ENCODE measurements at regions of chr1 and their contacts with region 1.

Region 1: DNA sequence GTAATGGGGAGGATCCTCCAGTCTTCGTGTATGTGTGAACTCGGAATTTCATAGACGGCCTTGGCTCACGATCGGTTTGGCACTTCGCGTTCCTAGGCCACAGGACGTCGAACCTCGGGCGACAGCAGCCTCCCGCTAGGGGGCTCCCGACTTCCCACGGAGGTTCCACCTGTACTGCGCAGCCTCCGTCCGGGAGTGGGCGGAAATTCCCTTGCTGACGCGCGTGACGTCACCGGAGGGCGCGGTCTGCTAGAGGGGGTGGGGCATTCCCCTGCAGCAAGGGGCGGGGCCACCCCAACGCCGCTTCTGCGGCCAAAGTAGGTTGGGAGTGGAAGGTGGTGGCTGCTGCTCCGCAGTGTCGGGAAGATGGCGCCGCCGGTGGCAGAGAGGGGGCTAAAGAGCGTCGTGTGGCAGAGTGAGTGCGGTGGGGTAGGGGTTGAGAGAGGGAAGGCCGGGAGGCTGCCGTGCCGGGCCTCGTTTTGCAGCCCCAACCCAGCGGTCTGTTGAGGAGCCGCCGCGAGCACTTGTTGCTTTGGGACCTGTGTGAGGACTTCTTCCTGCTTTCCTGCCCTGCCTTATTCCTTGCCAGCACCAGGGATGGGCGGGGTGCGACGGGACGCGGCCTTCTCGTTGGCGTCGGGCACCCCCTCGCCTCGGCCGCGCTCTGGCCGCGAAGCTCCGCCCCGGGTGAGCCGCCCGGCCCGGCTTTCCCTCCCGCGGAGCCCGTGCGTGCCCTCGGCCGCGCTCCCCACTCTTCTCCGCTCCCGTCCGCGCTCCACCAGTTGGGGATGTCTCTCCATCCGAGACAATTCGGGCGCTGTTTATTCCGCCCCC is at the start of gene STXBP3:
- DNase-seq: peak; percentile 98 to 100 (median 99)
- ATAC-seq: peak; percentile 97
- H3K4me3 ChIP-seq: peak within 1 kb of the TSS; percentile 76
- H3K4me3 Mint-ChIP-seq: peak within 1 kb of the TSS; percentile 90 to 100 (median 97)
- H3K27ac ChIP-seq: peak within 1 kb of the TSS; percentile 98
- H3K27ac Mint-ChIP-seq: peak within 1 kb of the TSS; percentile 93 to 100 (median 98)
- H3K4me1 ChIP-seq: peaks cover 3 to 6% of the 10 kb centered on the region in 2 donors
- H3K4me1 Mint-ChIP-seq: peaks cover 26 to 47% (median 41%) of the 10 kb centered on the region in 7 donors
- H3K27me3 ChIP-seq: no peaks in the 10 kb centered on the region
- H3K27me3 Mint-ChIP-seq: peaks cover 0 to 5% (median 0%) of the 10 kb centered on the region in 5 donors
- total RNA-seq, gene STXBP3: 46.8 to 75.2 (median 54.0) TPM

Region 2: DNA sequence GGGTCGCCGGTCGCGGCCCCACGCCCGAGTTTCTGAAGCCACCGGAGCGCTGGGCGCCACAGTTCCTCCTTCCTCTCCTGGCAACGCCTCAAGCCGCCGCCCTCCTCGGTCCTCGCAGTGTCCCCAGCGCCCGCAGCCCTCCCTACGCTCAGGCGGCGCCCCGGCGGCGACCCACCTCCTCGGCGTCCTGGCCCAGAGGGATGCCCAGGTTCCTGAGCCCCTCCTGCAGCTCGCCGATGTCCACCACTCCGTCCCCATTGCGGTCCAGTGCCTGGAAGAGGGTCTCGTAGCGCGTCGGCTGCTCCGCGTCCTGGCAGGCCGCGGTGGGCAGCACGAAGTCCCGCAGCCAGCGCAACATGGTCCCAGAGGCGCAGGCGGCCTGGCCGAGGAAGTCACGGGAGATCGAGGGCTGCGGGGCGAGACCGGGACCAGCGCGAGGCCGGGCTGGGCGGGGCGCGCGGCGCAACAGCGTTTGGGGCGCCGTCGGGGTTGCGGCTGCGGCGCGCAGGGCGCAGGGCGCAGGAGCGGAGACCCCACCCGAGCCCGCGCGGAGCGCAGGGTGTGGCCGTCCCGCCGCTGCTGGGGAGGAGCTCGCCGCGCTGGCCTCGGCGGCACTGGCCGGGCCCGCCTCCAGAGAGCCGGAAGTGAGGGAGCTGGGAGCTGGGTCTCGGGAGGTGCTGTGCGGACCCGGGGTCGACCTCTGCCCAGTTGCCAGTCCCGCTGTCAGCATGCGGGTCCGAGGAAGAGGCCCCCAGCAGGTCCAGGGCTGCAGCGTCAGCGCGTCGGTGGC is 546.6 kb before region 1 on chr1 and contains the start of gene SLC25A24:
- CTCF ChIA-PET with region 1: no interaction called
- POLR2A ChIA-PET with region 1: no interaction called
- intact Hi-C with region 1: loop called (anchors 2 to 5 kb)
- DNase-seq: peak; percentile 58 to 83 (median 71)
- ATAC-seq: peak; percentile 96
- H3K4me3 ChIP-seq: peak within 1 kb of the TSS; percentile 75
- H3K4me3 Mint-ChIP-seq: peak within 1 kb of the TSS; percentile 69 to 93 (median 88)
- H3K27ac ChIP-seq: peak within 1 kb of the TSS; percentile 65
- H3K27ac Mint-ChIP-seq: peak within 1 kb of the TSS; percentile 52 to 87 (median 82)
- H3K4me1 ChIP-seq: peaks cover 3 to 16% of the 10 kb centered on the region in 2 donors
- H3K4me1 Mint-ChIP-seq: peaks cover 18 to 42% (median 30%) of the 10 kb centered on the region in 7 donors
- H3K27me3 ChIP-seq: no peaks in the 10 kb centered on the region
- H3K27me3 Mint-ChIP-seq: peaks cover 0 to 18% (median 0%) of the 10 kb centered on the region in 5 donors
- total RNA-seq, gene SLC25A24: 7.1 to 27.2 (median 10.2) TPM

Region 3: GRCh38 chr1:108661030-108661620 is 85.5 kb before region 1 on chr1 and contains the start of gene HENMT1:
- CTCF ChIA-PET with region 1: no interaction called
- POLR2A ChIA-PET with region 1: interaction called, 3 read pairs
- intact Hi-C with region 1: loop called (anchors 1 kb)
- DNase-seq: peak; percentile 69 to 91 (median 88)
- ATAC-seq: peak; percentile 92
- H3K4me3 ChIP-seq: peak within 1 kb of the TSS; percentile 75
- H3K4me3 Mint-ChIP-seq: peak within 1 kb of the TSS; percentile 78 to 89 (median 85)
- H3K27ac ChIP-seq: peak within 1 kb of the TSS; percentile 99
- H3K27ac Mint-ChIP-seq: peak within 1 kb of the TSS; percentile 93 to 98 (median 96)
- H3K4me1 ChIP-seq: peaks cover 7 to 9% of the 10 kb centered on the region in 2 donors
- H3K4me1 Mint-ChIP-seq: peaks cover 11 to 46% (median 37%) of the 10 kb centered on the region in 7 donors
- H3K27me3 ChIP-seq: no peaks in the 10 kb centered on the region
- H3K27me3 Mint-ChIP-seq: no peaks in the 10 kb centered on the region
- total RNA-seq, gene HENMT1: 5.8 to 17.3 (median 13.5) TPM

Region 4: DNA sequence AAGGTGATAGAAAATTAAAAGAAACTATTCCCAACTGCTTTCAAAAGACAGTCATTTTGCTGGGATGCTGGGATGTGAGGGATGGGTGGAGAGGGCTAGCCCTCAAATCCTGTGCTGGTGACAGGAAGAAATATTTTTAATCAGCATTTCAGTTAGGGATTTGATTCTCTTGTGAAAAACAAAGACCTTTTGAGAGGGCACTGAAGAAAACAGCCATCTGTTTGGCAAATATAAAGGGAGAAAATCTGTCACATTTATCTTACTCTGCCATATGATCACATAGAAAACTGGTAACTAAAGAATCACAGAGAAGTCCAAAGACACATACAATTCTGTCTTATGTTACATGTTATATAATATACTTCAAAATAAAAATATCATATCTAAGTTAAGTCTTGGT is 12.2 kb after region 1 on chr1:
- CTCF ChIA-PET with region 1: no interaction called
- POLR2A ChIA-PET with region 1: interaction called, 3 read pairs
- intact Hi-C with region 1: loop called in 1 of 2 experiments (anchors 1 kb)
- DNase-seq: no peak
- ATAC-seq: no peak
- H3K4me3 ChIP-seq: no peak overlapping the region
- H3K4me3 Mint-ChIP-seq: no peak overlapping the region
- H3K27ac ChIP-seq: no peak overlapping the region
- H3K27ac Mint-ChIP-seq: peak overlapping the region in 1 of 9 donors; percentile 48
- H3K4me1 ChIP-seq: no peaks in the 10 kb centered on the region
- H3K4me1 Mint-ChIP-seq: peaks cover 0 to 8% (median 4%) of the 10 kb centered on the region in 7 donors
- H3K27me3 ChIP-seq: no peaks in the 10 kb centered on the region
- H3K27me3 Mint-ChIP-seq: no peaks in the 10 kb centered on the region

Region 5: DNA sequence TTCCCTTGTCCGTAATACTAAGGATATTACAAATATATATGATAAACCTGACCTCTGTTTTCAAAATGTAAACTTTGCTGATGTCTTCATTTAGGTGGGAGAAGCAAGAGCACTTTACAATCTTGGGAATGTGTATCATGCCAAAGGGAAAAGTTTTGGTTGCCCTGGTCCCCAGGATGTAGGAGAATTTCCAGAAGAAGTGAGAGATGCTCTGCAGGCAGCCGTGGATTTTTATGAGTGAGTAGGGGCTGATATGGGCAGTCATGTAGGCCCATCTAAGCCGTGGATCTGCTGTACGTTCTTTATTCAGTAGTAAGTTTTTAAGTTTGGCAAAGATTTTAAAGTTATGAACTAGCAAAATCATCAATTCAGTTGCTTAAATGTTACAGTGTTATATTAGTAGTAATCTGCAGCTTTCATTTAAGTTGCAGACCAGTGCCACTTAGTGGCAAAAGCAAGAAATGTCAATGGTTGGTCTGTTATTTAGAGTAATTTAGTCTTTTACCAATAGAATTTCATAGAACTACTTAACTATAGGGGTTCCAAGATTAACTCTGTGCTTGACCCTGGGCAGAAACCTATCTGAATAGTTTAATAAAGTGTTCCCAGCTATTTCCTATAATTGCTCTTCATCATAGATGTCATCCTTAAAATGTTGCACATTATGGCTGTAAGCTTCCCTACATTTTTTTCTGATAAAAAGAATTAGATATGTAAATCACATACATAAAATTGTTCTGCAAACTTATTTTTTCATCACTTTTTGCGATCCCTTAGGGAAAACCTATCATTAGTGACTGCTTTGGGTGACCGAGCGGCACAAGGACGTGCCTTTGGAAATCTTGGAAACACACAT is 151.5 kb after region 1 on chr1:
- CTCF ChIA-PET with region 1: no interaction called
- POLR2A ChIA-PET with region 1: no interaction called
- intact Hi-C with region 1: loop called (anchors 1 kb)
- DNase-seq: peak in 7 of 9 donors; percentile 30 to 67 (median 54)
- ATAC-seq: peak; percentile 82
- H3K4me3 ChIP-seq: no peak overlapping the region
- H3K4me3 Mint-ChIP-seq: no peak overlapping the region
- H3K27ac ChIP-seq: no peak overlapping the region
- H3K27ac Mint-ChIP-seq: no peak overlapping the region
- H3K4me1 ChIP-seq: no peaks in the 10 kb centered on the region
- H3K4me1 Mint-ChIP-seq: peaks cover 0 to 4% (median 1%) of the 10 kb centered on the region in 7 donors
- H3K27me3 ChIP-seq: no peaks in the 10 kb centered on the region
- H3K27me3 Mint-ChIP-seq: peaks cover 0 to 4% (median 3%) of the 10 kb centered on the region in 5 donors

Region 6: DNA sequence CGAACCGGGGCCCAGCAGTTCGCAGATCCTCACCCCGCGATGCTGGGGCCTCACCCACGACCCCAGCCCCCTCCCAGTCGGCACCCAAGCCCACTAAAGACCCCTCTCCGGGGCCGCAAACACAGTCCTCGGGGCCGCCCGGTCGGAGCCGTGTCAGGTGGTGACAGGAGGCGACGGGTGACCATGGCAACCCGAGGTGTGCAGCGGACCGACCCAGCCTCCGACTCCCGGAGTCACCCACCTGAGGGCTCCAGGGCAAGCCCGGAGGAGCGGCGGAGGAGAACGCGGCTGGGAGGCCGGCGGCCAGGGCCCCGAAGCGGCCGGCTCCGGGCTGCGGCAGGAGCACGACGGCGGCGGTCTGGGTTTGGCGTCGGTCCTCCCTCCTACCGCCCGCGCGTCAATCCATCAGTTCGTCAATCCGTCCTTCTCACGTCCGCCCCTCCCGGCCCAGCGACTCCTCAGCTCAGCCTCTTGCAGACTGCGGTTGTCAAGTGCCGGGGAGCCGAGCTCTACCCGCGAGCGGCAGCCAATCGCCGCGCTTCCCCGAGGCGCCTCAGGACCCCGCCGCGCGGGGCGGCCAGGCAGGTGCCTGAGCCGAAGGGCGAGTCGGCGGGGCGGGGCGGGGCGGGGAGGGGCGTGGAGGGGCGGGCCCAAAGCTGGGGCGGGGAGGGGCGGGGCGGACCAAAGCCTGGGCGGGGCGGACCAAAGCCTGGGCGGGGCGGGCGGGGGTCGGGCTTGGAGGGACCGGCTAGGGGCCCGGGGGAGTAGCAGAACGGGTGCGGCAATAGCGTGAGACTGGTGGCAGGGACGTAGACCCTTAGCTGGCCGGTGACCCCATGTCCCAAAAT is 295.3 kb after region 1 on chr1 and contains the start of gene WDR47:
- CTCF ChIA-PET with region 1: no interaction called
- POLR2A ChIA-PET with region 1: no interaction called
- intact Hi-C with region 1: loop called (anchors 1 kb)
- DNase-seq: peak; percentile 95 to 97 (median 96)
- ATAC-seq: peak; percentile 99
- H3K4me3 ChIP-seq: peak within 1 kb of the TSS; percentile 97
- H3K4me3 Mint-ChIP-seq: peak within 1 kb of the TSS; percentile 86 to 97 (median 94)
- H3K27ac ChIP-seq: peak within 1 kb of the TSS; percentile 90
- H3K27ac Mint-ChIP-seq: peak within 1 kb of the TSS; percentile 78 to 97 (median 91)
- H3K4me1 ChIP-seq: peaks cover 0 to 7% of the 10 kb centered on the region in 2 donors
- H3K4me1 Mint-ChIP-seq: peaks cover 7 to 25% (median 16%) of the 10 kb centered on the region in 7 donors
- H3K27me3 ChIP-seq: no peaks in the 10 kb centered on the region
- H3K27me3 Mint-ChIP-seq: peaks cover 0 to 7% (median 0%) of the 10 kb centered on the region in 5 donors
- total RNA-seq, gene WDR47: 9.8 to 15.4 (median 14.4) TPM

Region 7: DNA sequence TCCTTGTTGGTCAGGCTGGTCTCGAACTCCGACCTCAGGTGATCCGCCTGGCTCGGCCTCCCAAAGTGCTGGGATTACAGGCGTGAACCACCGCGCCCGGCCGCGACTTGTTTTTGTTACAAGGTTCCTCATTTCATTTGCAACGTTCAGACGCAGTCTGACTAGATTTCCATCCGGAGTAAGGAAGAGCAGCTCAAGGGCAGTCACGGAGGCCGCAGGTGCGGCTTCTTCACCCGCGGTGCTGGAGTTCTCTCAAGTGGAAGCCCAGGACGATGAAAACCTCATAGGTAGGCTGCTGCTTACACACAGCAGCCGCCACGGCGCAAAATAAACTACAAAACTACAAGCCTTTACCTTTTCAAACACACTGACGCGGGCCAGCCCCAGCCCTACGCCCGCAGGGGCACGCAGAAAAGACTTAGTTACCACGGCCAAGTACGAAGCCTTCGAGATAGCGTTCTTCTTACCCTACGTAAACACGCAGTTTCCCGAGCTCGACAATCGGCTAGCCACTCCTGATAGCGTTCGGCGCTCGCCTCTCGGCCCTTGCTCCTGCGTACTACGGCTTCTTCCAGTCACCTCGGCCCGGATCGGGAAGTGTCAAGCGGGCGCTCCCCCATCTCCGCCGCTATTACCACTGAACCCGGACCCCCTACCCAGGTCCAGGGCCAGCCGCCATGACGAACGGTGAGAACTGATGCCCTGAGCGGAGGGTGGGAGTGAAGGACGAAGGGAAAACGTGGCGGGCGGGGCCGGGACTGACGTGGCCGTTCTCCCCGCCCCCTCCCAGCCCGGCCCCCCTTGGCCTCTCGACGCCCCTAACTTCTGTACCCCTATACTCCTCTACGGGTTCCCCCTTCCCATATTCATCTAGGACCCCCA is 343.8 kb after region 1 on chr1 and contains the start of gene TMEM167B:
- CTCF ChIA-PET with region 1: no interaction called
- POLR2A ChIA-PET with region 1: no interaction called
- intact Hi-C with region 1: loop called in 1 of 2 experiments (anchors 5 kb)
- DNase-seq: peak; percentile 71 to 92 (median 87)
- ATAC-seq: peak; percentile 98
- H3K4me3 ChIP-seq: peak within 1 kb of the TSS; percentile 84
- H3K4me3 Mint-ChIP-seq: peak within 1 kb of the TSS; percentile 88 to 98 (median 96)
- H3K27ac ChIP-seq: peak within 1 kb of the TSS; percentile 97
- H3K27ac Mint-ChIP-seq: peak within 1 kb of the TSS; percentile 90 to 99 (median 98)
- H3K4me1 ChIP-seq: peaks cover 14 to 18% of the 10 kb centered on the region in 2 donors
- H3K4me1 Mint-ChIP-seq: peaks cover 15 to 43% (median 36%) of the 10 kb centered on the region in 7 donors
- H3K27me3 ChIP-seq: no peaks in the 10 kb centered on the region
- H3K27me3 Mint-ChIP-seq: no peaks in the 10 kb centered on the region
- total RNA-seq, gene TMEM167B: 33.2 to 65.6 (median 41.2) TPM